ENCODE measurements at regions of chr1 and their contacts with region 1.

Region 1: DNA sequence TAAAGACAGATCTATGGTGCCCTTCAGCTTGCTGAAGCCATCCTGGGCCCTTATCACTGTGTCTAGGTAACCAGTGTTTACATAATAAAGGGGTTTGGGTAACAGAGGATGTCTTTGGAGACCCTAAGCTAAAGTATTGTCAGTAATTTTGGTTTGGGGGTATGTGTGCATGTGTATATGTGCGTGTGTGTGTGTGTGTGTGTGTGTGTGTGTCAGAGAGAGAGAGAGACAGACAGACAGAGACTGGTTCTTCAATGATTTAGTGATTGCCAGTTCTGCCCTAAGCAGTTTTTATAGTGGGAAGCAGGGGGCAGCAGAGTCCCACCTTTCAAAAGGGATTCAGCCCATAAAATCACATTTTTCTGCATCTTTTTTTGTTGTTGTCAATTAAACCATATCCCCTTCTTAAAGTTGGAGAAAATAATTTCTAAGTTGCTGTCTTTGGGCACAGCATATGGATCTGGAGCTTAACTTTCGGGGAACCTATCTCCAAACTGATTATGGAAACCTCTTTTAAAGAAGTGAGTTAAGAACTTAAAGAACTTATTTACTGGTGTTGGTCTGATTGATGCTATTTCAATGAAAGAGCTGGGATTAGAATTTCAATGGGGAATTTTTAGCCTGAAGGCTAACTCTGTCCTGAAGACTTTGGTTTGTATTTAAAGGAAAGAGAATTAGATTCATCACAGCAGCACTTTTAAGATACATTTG is 51.1 kb downstream of the ZNF326 start:
- DNase-seq: peak in 1 of 2 experiments; percentile 66
- H3K4me3 ChIP-seq: no peak overlapping the region
- H3K27ac ChIP-seq: no peak overlapping the region
- H3K4me1 ChIP-seq: no peaks in the 10 kb centered on the region
- H3K27me3 ChIP-seq: no peaks in the 10 kb centered on the region
- CTCF ChIP-seq: peak in 2 of 3 experiments; percentile 73 to 75; a peak in 3 of 4 replicates
- EP300 ChIP-seq: no peak
- POLR2A ChIP-seq: no peak
- RAD21 ChIP-seq: peak; percentile 89 to 90

Region 2: GRCh38 chr1:90012305-90012704 is 33.7 kb before region 1 on chr1:
- CTCF ChIA-PET with region 1: no interaction called
- POLR2A ChIA-PET with region 1: no interaction called
- DNase-seq: no peak
- H3K4me3 ChIP-seq: no peak overlapping the region
- H3K27ac ChIP-seq: no peak overlapping the region
- H3K4me1 ChIP-seq: no peaks in the 10 kb centered on the region
- H3K27me3 ChIP-seq: no peaks in the 10 kb centered on the region
- CTCF ChIP-seq: no peak
- EP300 ChIP-seq: no peak
- POLR2A ChIP-seq: no peak
- RAD21 ChIP-seq: no peak

Region 3: GRCh38 chr1:90023691-90024090 is 22.3 kb before region 1 on chr1:
- CTCF ChIA-PET with region 1: interaction called, 11 read pairs
- POLR2A ChIA-PET with region 1: no interaction called
- DNase-seq: no peak
- H3K4me3 ChIP-seq: no peak overlapping the region
- H3K27ac ChIP-seq: no peak overlapping the region
- H3K4me1 ChIP-seq: no peaks in the 10 kb centered on the region
- H3K27me3 ChIP-seq: no peaks in the 10 kb centered on the region
- CTCF ChIP-seq: no peak
- EP300 ChIP-seq: no peak
- POLR2A ChIP-seq: no peak
- RAD21 ChIP-seq: no peak

Region 4: GRCh38 chr1:90074137-90074536 is 28.1 kb after region 1 on chr1:
- CTCF ChIA-PET with region 1: interaction called, 10 read pairs
- POLR2A ChIA-PET with region 1: interaction called, 3 read pairs
- DNase-seq: no peak
- H3K4me3 ChIP-seq: no peak overlapping the region
- H3K27ac ChIP-seq: no peak overlapping the region
- H3K4me1 ChIP-seq: no peaks in the 10 kb centered on the region
- H3K27me3 ChIP-seq: no peaks in the 10 kb centered on the region
- CTCF ChIP-seq: no peak
- EP300 ChIP-seq: no peak
- POLR2A ChIP-seq: no peak
- RAD21 ChIP-seq: no peak

Region 5: DNA sequence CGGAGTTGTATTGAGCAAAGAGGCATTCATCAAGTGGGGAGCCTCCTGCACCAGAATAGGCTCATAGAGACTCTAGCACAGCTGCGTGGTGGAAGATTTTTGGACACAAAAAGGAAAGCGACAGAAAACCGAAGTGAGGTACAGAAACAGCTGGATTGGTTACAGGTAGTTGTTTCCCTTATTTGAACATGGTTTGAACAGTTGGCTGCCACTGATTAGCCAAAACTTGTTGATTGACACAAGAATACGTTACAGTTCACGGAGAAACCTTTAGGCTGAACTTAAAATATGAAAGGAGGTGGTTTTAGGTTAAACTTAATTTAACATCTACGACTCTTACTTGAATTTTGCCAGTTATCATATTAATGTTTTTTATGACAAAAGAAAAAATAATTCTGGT is 38.0 kb after region 1 on chr1:
- CTCF ChIA-PET with region 1: interaction called, 13 read pairs
- POLR2A ChIA-PET with region 1: no interaction called
- DNase-seq: no peak
- H3K4me3 ChIP-seq: no peak overlapping the region
- H3K27ac ChIP-seq: no peak overlapping the region
- H3K4me1 ChIP-seq: no peaks in the 10 kb centered on the region
- H3K27me3 ChIP-seq: no peaks in the 10 kb centered on the region
- CTCF ChIP-seq: no peak
- EP300 ChIP-seq: no peak
- POLR2A ChIP-seq: no peak
- RAD21 ChIP-seq: no peak

Region 6: GRCh38 chr1:90104941-90105538 is 59.0 kb after region 1 on chr1:
- CTCF ChIA-PET with region 1: interaction called, 29 read pairs
- POLR2A ChIA-PET with region 1: no interaction called
- DNase-seq: no peak
- H3K4me3 ChIP-seq: no peak overlapping the region
- H3K27ac ChIP-seq: no peak overlapping the region
- H3K4me1 ChIP-seq: no peaks in the 10 kb centered on the region; a peak in 1 of 7 replicates
- H3K27me3 ChIP-seq: no peaks in the 10 kb centered on the region
- CTCF ChIP-seq: no peak
- EP300 ChIP-seq: no peak
- POLR2A ChIP-seq: no peak
- RAD21 ChIP-seq: no peak

Region 7: DNA sequence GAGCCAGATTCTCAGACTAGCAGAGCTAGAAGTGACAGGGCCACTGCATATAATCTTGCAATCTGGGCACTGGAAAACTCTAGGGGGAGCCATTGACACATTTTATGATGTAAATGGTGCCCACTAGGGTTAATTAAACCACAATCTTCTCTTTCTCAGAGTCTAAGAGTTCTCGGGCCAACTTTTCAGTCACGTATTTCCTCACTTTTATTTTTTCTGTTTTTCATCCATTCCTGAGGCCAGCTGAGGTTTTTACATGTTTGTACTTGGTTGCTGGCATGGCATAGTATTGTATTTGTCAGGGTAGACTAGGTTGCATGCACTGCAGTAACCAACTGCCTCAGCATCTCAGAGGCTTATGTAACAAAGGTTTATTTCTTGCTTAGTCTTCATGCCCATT is 87.1 kb after region 1 on chr1:
- CTCF ChIA-PET with region 1: interaction called, 13 read pairs
- POLR2A ChIA-PET with region 1: no interaction called
- DNase-seq: peak in 1 of 2 experiments; percentile 51
- H3K4me3 ChIP-seq: no peak overlapping the region
- H3K27ac ChIP-seq: no peak overlapping the region
- H3K4me1 ChIP-seq: no peaks in the 10 kb centered on the region
- H3K27me3 ChIP-seq: no peaks in the 10 kb centered on the region
- CTCF ChIP-seq: peak in 2 of 3 experiments; percentile 76 to 78; a peak in 3 of 4 replicates
- EP300 ChIP-seq: no peak
- POLR2A ChIP-seq: no peak
- RAD21 ChIP-seq: peak; percentile 79 to 88

Region 8: DNA sequence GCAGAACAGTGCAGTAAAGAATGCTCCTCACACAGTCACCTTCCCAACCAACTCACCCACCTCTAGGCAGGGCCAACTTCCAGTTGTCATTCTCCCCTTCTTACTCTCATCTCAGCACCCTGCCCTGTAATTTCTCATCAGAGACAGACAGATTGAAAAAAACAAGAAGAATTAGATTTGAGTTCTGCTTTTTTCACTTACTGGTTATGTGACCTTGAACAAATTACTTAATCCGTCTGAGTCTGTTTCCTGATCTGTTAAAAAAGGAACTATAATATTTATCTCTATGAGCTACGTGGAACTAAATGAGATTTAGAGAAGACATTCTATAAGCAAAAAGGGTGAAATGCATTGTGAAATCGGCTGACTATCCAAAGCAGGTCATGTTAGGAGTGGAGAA is 279.2 kb after region 1 on chr1:
- CTCF ChIA-PET with region 1: no interaction called
- POLR2A ChIA-PET with region 1: no interaction called
- DNase-seq: no peak
- H3K4me3 ChIP-seq: no peak overlapping the region
- H3K27ac ChIP-seq: no peak overlapping the region
- H3K4me1 ChIP-seq: peaks cover 0 to 3% (median 0%) of the 10 kb centered on the region in 4 experiments; a peak in 1 of 7 replicates
- H3K27me3 ChIP-seq: no peaks in the 10 kb centered on the region
- CTCF ChIP-seq: no peak
- EP300 ChIP-seq: no peak
- POLR2A ChIP-seq: no peak
- RAD21 ChIP-seq: no peak

Measured in H1 (cell line).